Naive thymus-derived CD8-positive, alpha-beta T cell (primary cell): ENCODE measurements at regions of chr3 and their contacts with region 1.

Region 1: GRCh38 chr3:136196401-136197158 is 445 bp upstream of the MSL2 start:
- DNase-seq: peak; percentile 95 to 100 (median 98)
- ATAC-seq: peak; percentile 59 to 66
- H3K4me3 Mint-ChIP-seq: peak overlapping the region; percentile 83 to 100 (median 98)
- H3K27ac Mint-ChIP-seq: peak overlapping the region; percentile 94 to 100 (median 99)
- H3K4me1 Mint-ChIP-seq: peaks cover 28 to 54% (median 36%) of the 10 kb centered on the region in 4 donors
- H3K27me3 Mint-ChIP-seq: peaks cover 0 to 5% (median 0%) of the 10 kb centered on the region in 5 donors

Region 2: DNA sequence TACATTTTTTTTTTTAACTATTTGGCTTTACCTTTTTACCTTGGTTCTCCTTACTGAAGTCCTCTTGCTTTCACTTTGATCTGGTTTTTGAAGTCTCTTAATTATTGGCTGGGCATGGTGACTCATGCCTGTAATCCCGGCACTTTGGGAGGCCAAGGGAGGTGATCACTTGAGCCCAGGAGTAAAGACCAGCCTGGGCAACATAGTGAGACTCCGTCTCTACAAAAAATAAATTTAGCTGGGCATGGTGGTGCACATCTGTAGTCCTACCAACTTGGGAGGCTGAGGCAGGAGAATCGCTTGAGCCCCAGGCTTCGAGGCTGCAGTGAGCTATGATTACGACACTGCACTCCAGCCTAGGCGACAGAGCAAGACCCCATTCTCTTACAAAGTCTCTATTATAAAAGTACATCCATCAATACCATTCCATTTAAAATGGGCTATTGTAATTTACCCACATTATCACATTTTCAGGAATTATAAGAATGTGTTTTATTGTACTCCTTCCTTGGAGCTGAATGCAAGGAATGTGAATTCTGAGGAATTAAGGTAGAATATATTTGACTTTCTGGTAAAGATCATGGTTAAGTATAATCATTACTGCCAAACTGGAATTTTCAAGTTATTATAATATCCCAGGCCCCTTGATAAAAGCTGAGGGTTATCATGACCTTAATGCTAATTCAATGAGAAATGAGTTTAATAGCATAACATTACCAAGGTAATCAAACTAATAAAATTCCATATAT is 49.4 kb before region 1 on chr3:
- POLR2A ChIA-PET with region 1: interaction called, 11 read pairs
- DNase-seq: no peak
- ATAC-seq: no peak
- H3K4me3 Mint-ChIP-seq: no peak overlapping the region
- H3K27ac Mint-ChIP-seq: peak overlapping the region in 6 of 10 donors; percentile 30 to 80 (median 62)
- H3K4me1 Mint-ChIP-seq: peaks cover 30 to 52% (median 51%) of the 10 kb centered on the region in 4 donors
- H3K27me3 Mint-ChIP-seq: no peaks in the 10 kb centered on the region

Region 3: DNA sequence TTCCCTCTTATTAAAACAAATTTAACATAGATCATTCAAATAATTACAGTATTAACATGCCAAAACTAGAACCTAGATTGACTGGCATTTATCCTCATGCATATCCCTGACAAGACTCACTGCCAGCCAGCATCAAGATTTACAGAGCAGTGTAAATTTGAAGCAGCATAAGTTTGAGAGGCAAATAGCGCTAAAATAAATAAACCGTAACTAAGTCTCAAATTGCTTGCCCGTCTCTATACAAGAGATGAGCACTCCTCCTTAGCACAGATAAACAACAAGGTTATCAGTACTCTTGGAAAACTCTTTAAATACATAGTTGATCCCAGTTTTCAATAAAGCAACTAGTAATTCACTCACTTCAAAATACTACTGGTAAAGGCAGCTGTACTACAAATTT is 30.1 kb before region 1 on chr3:
- POLR2A ChIA-PET with region 1: interaction called, 14 read pairs
- DNase-seq: no peak
- ATAC-seq: no peak
- H3K4me3 Mint-ChIP-seq: peak overlapping the region in 9 of 10 donors; percentile 15 to 84 (median 59)
- H3K27ac Mint-ChIP-seq: peak overlapping the region in 5 of 10 donors; percentile 27 to 76 (median 44)
- H3K4me1 Mint-ChIP-seq: peaks cover 29 to 71% (median 66%) of the 10 kb centered on the region in 4 donors
- H3K27me3 Mint-ChIP-seq: no peaks in the 10 kb centered on the region

Region 4: DNA sequence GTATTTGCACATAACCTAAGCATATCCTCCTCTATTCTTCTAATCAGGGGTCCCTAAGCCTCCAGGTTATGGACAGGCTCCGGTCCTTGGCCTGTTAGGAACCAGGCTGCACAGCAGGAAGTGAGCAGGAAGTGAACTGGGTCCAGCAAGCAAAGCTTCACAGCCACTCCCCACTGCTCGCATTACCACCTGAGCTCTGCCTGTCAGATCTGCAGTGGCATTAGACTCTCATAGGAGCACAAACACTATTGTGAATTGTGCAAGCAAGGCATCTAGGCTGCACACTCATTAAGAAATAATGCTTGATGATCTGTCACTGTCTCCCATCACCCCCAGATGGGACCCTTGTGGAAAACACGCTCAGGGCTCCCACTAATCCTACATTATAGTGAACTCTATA is 10.2 kb before region 1 on chr3:
- POLR2A ChIA-PET with region 1: interaction called, 34 read pairs
- DNase-seq: peak in 1 of 10 donors; percentile 5
- ATAC-seq: peak; percentile 62
- H3K4me3 Mint-ChIP-seq: peak overlapping the region; percentile 26 to 97 (median 77)
- H3K27ac Mint-ChIP-seq: peak overlapping the region in 9 of 10 donors; percentile 9 to 87 (median 67)
- H3K4me1 Mint-ChIP-seq: peaks cover 29 to 96% (median 87%) of the 10 kb centered on the region in 4 donors
- H3K27me3 Mint-ChIP-seq: no peaks in the 10 kb centered on the region

Region 5: DNA sequence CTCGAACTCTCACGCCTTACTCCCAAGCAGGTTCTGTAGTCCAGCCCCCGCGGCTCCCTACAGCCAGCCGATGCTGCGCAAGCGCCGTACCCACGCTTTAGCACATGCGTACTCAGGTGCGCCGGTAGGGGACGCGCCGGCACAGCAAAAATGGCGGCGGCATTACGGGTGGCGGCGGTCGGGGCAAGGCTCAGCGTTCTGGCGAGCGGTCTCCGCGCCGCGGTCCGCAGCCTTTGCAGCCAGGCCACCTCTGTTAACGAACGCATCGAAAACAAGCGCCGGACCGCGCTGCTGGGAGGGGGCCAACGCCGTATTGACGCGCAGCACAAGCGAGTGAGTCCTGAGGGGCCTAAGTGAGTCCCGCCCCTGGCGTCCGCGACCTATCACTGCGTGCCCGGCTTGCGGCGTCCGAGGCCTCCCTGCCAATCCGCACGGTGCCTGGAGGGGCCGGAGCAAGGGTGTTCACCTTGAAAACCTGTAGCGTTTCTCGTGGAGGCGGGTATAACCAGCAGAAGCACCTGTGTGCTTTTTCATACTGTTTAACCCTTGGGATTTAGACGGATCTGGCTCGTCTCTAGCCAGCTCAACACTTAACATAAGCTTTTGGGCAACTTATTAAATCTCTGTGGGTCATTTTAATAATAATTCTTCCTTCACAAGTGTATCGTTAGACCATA is 53.8 kb after region 1 on chr3 and contains the start of gene PCCB:
- POLR2A ChIA-PET with region 1: interaction called, 118 read pairs
- DNase-seq: peak; percentile 80 to 98 (median 91)
- ATAC-seq: peak; percentile 97 to 98
- H3K4me3 Mint-ChIP-seq: peak within 1 kb of the TSS; percentile 81 to 94 (median 91)
- H3K27ac Mint-ChIP-seq: peak within 1 kb of the TSS; percentile 88 to 98 (median 94)
- H3K4me1 Mint-ChIP-seq: peaks cover 12 to 27% (median 25%) of the 10 kb centered on the region in 4 donors
- H3K27me3 Mint-ChIP-seq: no peaks in the 10 kb centered on the region
- polyA plus RNA-seq, gene PCCB: 30.2 to 42.5 (median 39.1) TPM

Region 6: DNA sequence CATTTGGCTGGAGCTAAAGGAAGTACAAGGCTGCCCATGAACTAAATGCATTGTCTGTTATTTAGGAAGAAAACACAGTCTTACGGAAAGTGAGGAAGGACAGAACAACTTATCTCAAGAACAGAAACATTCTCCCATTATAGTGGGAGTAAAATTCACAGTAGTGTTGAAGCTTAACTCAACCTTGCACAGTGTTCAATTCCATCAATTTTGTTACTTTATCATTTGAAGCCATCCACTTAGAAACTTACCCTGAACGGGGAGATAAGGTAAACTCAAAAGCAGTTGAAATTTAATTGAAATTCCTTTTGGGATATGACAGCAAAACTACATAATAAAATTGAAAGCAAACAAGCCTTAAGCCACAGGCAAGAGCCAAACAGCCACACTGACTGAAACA is 240.5 kb after region 1 on chr3:
- POLR2A ChIA-PET with region 1: no interaction called
- DNase-seq: no peak
- ATAC-seq: no peak
- H3K4me3 Mint-ChIP-seq: no peak overlapping the region
- H3K27ac Mint-ChIP-seq: no peak overlapping the region
- H3K4me1 Mint-ChIP-seq: peaks cover 0 to 3% (median 0%) of the 10 kb centered on the region in 4 donors
- H3K27me3 Mint-ChIP-seq: no peaks in the 10 kb centered on the region

Region 7: GRCh38 chr3:136752422-136753325 is 556.1 kb after region 1 on chr3:
- POLR2A ChIA-PET with region 1: interaction called, 107 read pairs
- DNase-seq: peak; percentile 96 to 99 (median 99)
- ATAC-seq: peak; percentile 81 to 84
- H3K4me3 Mint-ChIP-seq: peak overlapping the region; percentile 92 to 98 (median 94)
- H3K27ac Mint-ChIP-seq: peak overlapping the region; percentile 91 to 99 (median 96)
- H3K4me1 Mint-ChIP-seq: peaks cover 24 to 50% (median 43%) of the 10 kb centered on the region in 4 donors
- H3K27me3 Mint-ChIP-seq: no peaks in the 10 kb centered on the region